ENCODE measurements at regions of chr3 and their contacts with region 1.

Region 1: DNA sequence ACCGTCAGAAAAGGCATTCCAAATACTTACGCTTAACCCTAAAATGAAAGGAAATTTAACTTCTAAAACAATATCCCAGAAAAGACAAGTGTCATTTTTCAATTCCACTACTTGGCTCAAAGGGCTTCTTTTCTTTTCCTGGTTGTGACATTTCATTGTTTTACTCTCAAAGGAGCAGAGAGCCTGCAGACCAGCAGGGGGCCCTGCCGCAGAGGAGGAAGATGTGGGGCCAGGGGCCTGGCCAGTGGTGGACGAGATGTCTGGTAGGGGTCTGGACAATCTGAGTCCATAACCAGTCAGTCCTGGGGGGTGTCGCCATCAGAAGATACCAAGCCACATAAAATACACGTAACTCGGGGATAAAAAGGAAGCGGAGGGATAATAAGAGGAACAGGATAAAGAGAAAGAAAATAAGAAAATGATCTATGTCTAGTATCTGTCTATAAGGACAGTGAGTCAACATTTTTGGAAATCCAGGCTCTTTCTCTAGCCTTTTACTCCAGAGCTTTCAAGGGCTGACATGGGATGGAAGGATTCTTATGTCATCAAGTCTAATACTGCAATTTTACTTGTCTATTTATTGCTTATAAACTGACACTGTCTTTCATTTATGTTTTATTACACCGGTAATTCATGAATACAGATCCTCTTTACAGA is 54.2 kb upstream of the ARHGEF3 start:
- DNase-seq: peak in 6 of 9 experiments; percentile 20 to 53 (median 26)
- ATAC-seq: no peak
- H3K4me3 ChIP-seq: no peak overlapping the region
- H3K4me3 Mint-ChIP-seq: no peak overlapping the region
- H3K27ac ChIP-seq: no peak overlapping the region
- H3K27ac Mint-ChIP-seq: peak overlapping the region; percentile 32
- H3K4me1 ChIP-seq: peaks cover 9% of the 10 kb centered on the region
- H3K4me1 Mint-ChIP-seq: peaks cover 48% of the 10 kb centered on the region
- H3K27me3 ChIP-seq: no peaks in the 10 kb centered on the region
- H3K27me3 Mint-ChIP-seq: no peaks in the 10 kb centered on the region
- CTCF ChIP-seq: peak; percentile 29

Region 2: GRCh38 chr3:56819016-56819809 is 36.8 kb before region 1 on chr3:
- CTCF ChIA-PET with region 1: no interaction called
- POLR2A ChIA-PET with region 1: no interaction called
- intact Hi-C with region 1: loop called in 1 of 2 experiments (anchors 5 kb)
- DNase-seq: no peak
- ATAC-seq: no peak
- H3K4me3 ChIP-seq: no peak overlapping the region
- H3K4me3 Mint-ChIP-seq: no peak overlapping the region
- H3K27ac ChIP-seq: no peak overlapping the region
- H3K27ac Mint-ChIP-seq: no peak overlapping the region
- H3K4me1 ChIP-seq: peaks cover 15% of the 10 kb centered on the region
- H3K4me1 Mint-ChIP-seq: peaks cover 59% of the 10 kb centered on the region
- H3K27me3 ChIP-seq: no peaks in the 10 kb centered on the region
- H3K27me3 Mint-ChIP-seq: no peaks in the 10 kb centered on the region
- CTCF ChIP-seq: no peak

Measured in CD8-positive, alpha-beta T cell (primary cell).